ENCODE measurements at regions of chr6 and their contacts with region 1.

Region 1: GRCh38 chr6:37110500-37111461 is 59.2 kb upstream of the PIM1 start:
- DNase-seq: peak; percentile 71
- H3K4me3 Mint-ChIP-seq: no peak overlapping the region
- H3K27ac Mint-ChIP-seq: peak overlapping the region; percentile 80
- H3K4me1 Mint-ChIP-seq: peaks cover 17% of the 10 kb centered on the region
- H3K27me3 Mint-ChIP-seq: no peaks in the 10 kb centered on the region

Region 2: GRCh38 chr6:36809941-36810803 is 300.6 kb before region 1 on chr6:
- CTCF ChIA-PET with region 1: no interaction called
- intact Hi-C with region 1: no loop called
- DNase-seq: no peak
- H3K4me3 Mint-ChIP-seq: no peak overlapping the region
- H3K27ac Mint-ChIP-seq: no peak overlapping the region
- H3K4me1 Mint-ChIP-seq: no peaks in the 10 kb centered on the region
- H3K27me3 Mint-ChIP-seq: no peaks in the 10 kb centered on the region

Region 3: GRCh38 chr6:37137201-37138090 is 26.7 kb after region 1 on chr6:
- CTCF ChIA-PET with region 1: no interaction called
- intact Hi-C with region 1: loop called (anchors 1 kb)
- DNase-seq: peak; percentile 72
- H3K4me3 Mint-ChIP-seq: no peak overlapping the region
- H3K27ac Mint-ChIP-seq: peak overlapping the region; percentile 74
- H3K4me1 Mint-ChIP-seq: peaks cover 39% of the 10 kb centered on the region
- H3K27me3 Mint-ChIP-seq: no peaks in the 10 kb centered on the region

Region 4: DNA sequence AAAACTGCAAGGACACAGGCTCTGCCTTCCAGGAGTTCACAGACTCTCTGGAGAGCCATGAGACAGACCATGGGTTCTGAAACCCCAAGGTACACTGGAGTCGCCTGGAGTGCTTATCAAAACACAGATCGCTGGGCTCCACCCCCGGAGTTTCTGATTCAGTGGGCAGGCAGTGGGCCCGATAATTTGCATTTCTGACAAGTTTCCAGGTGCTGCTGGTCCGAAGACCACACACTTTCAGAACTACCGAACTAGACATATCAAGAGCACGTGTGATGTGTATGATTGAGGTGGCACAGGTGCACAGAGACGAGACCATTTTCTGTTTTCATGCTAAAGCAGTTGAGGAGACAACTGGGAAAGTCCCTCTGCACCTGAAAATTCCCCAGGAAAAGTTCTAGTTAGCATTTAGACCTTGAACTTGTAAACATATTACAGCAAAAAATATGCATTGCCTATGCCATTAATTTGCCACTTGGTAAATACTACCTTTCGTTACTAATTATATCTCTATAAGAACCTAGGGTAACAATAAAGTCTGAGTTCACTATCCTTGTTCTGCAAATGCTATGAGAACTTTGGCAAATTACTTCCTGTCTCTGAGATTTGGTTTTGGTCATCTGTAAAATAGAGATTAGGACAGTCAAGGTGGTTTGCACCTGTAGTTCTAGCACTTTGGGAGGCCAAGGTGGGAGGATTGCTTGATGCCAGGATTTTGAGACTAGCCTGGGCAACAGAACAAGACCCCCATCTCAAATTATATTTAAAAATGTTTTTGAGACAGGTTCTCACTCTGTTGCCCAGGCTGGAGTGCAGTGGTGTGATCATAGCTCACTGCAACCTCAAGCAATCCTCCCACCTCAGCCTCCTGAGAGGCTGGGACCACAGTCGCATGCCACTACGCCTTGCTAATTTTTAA is 44.9 kb after region 1 on chr6:
- CTCF ChIA-PET with region 1: no interaction called
- intact Hi-C with region 1: loop called (anchors 1 kb)
- DNase-seq: peak; percentile 87
- H3K4me3 Mint-ChIP-seq: peak overlapping the region; percentile 39
- H3K27ac Mint-ChIP-seq: peak overlapping the region; percentile 90
- H3K4me1 Mint-ChIP-seq: peaks cover 32% of the 10 kb centered on the region
- H3K27me3 Mint-ChIP-seq: no peaks in the 10 kb centered on the region

Region 5: GRCh38 chr6:37239950-37240713 is 129.4 kb after region 1 on chr6:
- CTCF ChIA-PET with region 1: no interaction called
- intact Hi-C with region 1: loop called (anchors 2 kb)
- DNase-seq: peak; percentile 93
- H3K4me3 Mint-ChIP-seq: no peak overlapping the region
- H3K27ac Mint-ChIP-seq: peak overlapping the region; percentile 83
- H3K4me1 Mint-ChIP-seq: peaks cover 39% of the 10 kb centered on the region
- H3K27me3 Mint-ChIP-seq: no peaks in the 10 kb centered on the region

Region 6: DNA sequence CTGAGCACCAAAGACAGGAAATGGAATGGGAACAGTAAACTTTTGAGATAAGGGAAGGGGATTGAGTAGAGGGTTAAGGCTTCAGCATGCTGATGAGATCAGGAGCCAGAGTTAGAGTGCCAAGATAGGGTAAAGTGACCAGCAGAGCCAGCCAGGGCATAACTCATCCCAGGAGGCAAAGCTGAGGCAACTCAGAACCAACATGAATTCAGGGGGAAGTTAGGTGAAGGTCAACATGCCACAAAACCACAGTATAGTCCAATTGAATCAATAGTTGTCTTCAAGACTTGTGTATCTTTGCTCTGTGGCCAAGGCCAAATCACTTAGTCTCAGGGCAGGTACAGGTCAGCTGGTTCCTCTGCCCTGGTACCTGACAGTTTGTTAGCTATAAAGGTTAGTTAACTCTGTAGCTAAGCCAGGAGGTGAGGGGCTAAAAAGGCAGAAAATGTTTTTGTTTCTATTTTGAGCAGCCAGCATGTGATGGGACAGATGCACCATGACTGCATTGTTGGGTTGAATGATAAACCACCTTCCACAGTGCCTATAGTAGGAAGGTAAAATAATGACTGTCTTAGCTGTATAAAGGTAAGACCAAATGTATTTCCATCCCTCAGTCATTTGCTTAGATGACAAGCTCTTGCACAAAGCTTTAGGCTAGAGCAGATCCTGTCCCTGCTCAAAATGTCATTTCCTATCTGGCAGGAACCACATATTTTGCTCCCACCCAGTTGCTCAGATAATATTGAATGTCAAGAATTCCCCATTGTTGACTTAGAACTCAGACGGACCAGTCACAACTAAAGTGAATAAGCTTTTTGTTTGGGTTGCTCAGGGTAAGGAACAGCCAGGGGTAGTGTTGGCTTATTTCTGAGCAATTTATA is 258.8 kb after region 1 on chr6:
- CTCF ChIA-PET with region 1: no interaction called
- intact Hi-C with region 1: no loop called
- DNase-seq: no peak
- H3K4me3 Mint-ChIP-seq: no peak overlapping the region
- H3K27ac Mint-ChIP-seq: no peak overlapping the region
- H3K4me1 Mint-ChIP-seq: no peaks in the 10 kb centered on the region
- H3K27me3 Mint-ChIP-seq: no peaks in the 10 kb centered on the region

Measured in activated naive CD4-positive, alpha-beta T cell treated with anti-CD3 and anti-CD28 coated beads for 36 hours (primary cell).